Motor neuron (in vitro differentiated cells): ENCODE measurements at regions of chr5 and their contacts with region 1.

Region 1: GRCh38 chr5:59799668-59800346 is 93.7 kb downstream of the PDE4D start:
- ATAC-seq: peak; percentile 45 to 74 (median 62)
- H3K4me3 ChIP-seq: no peak overlapping the region
- H3K27ac ChIP-seq: no peak overlapping the region
- H3K4me1 ChIP-seq: no peaks in the 10 kb centered on the region

Region 2: DNA sequence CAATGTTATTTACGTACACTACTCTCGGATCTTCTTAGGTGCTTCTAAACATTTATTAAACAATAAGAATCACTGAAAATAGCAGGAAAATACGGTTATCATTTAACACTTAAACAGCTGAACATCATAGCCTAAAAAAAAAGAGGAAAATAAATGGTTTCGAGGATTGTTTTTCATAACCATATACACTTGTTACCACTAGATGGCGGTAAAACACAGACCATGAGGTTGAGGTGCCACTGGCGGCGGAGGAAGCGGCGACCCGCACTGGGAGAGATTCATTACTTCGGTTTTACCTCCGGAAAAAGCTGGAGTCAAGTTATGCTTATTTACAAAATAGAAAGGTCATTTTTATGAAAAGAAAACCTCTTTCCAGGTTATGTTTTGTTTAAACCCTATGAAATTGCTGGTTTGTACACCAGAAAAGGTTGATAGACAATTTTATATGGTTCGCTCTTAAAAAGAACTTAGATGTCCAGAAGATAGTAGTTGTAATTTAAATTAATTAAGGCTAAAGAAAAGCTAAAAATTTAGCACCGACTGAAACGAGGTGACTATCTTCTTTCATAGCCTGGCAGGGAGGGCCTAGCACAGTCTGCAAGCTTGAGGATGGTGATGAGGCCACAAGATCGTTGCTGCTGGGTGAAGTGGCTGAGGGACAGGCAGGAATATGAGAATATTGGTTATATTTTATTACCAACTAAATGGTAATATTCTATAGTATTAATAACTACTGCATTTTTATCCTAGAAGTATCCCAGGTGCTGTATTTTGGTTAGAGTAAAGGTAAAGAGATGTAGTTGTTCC is 611.2 kb before region 1 on chr5:
- in situ Hi-C with region 1: loop called in 4 of 9 experiments (anchors 25 kb)
- ATAC-seq: peak; percentile 53 to 81 (median 68)
- H3K4me3 ChIP-seq: peak overlapping the region in 4 of 5 donors; percentile 9 to 31 (median 21)
- H3K27ac ChIP-seq: no peak overlapping the region
- H3K4me1 ChIP-seq: peaks cover 0 to 14% of the 10 kb centered on the region in 2 donors

Region 3: DNA sequence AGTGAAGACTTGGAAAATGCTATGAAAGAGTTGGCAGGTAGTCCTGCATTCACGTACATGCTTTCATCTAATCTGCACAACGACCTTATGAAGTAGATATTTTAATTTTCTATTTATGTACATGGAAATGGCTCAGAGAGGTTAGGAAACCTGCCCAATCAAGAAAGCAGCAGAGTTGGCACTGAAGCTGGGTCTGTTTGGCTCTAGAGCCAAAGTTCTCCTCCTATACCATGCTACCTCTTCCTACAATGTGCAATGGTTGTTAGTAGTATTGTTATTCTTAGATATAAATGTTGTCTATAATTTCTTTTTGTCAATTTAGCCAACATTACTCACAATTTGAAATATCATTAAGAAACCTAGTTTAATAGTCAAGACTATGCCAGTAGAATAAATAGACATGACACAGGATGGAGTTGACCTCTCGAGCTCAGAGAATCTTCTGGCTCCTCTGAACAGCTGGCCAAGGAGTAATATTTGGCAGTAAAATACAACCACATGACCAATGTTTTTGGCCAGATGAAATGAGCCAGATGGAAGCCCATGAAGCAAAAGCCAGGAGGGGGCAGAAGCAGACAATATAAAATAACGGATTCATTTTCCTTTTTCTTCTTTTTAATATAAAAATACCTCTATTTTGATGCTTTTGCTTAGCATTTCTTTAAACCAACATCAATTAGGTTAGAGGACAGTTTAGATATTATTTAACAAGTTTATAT is 448.6 kb before region 1 on chr5:
- in situ Hi-C with region 1: no loop called
- ATAC-seq: peak in 1 of 8 experiments; percentile 63
- H3K4me3 ChIP-seq: no peak overlapping the region
- H3K27ac ChIP-seq: no peak overlapping the region
- H3K4me1 ChIP-seq: no peaks in the 10 kb centered on the region

Region 4: DNA sequence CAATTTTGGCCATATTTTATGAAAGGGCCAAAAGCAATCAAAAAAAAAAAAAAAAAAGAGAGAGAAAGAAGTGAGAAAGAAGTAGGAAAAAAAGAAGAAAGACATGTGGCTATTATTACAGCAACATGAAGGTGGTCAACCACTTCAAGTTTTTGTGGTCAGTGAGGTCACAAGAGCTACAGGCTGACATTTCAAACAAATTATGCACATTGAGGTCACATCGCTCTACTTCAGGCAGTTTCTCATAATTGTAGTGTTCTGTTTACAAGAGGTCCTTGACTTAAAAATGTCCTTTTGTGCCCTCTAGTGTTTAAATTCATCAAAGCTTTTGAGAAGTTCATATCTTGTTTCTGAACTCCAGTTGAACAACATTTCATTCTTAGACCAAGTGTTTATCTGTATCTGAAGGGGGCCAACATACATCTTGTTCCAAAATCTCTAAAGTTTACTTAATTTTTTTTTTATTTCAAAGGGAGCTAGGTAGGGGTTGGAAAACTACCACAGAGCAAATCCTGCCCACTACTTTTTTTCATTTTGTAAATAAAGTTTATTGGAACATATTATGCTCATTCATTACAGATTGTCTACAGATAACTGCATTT is 419.4 kb before region 1 on chr5:
- in situ Hi-C with region 1: loop called in 3 of 9 experiments (anchors 25 kb)
- ATAC-seq: peak; percentile 39 to 96 (median 56)
- H3K4me3 ChIP-seq: no peak overlapping the region
- H3K27ac ChIP-seq: no peak overlapping the region
- H3K4me1 ChIP-seq: peaks cover 0 to 2% of the 10 kb centered on the region in 2 donors

Region 5: DNA sequence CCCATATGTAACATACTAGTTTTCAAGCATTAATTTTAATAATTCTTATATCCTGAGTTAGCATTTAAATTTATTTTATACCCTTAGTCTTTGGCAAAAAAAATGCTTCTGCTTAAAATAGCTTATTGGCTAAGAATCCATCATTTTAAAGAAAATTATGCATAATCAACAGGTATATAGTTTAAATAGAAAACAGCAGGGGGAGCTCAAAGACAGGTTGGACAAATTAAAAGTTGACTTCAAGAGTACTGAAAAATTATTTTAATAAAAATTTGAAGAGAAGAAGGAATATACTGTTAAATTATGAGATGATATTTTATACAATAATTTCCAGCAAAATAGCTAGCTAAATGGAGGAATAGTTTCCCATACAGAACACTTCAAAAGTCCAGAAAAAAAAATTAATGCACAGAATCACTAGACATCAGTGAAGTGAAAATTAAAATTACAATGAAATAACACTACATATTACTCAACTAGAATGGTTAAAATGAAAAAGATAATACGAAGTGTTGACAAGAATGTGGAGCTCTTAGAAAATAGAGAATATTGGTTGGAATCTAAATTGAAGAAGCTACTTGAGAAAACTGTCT is 293.4 kb before region 1 on chr5:
- in situ Hi-C with region 1: loop called in 1 of 9 experiments (anchors 25 kb)
- ATAC-seq: no peak
- H3K4me3 ChIP-seq: no peak overlapping the region
- H3K27ac ChIP-seq: no peak overlapping the region
- H3K4me1 ChIP-seq: peaks cover 3% of the 10 kb centered on the region in 2 donors

Region 6: GRCh38 chr5:59685793-59686192 is 114.0 kb before region 1 on chr5:
- in situ Hi-C with region 1: loop called in 1 of 9 experiments (anchors 25 kb)
- ATAC-seq: peak in 3 of 8 experiments; percentile 45 to 62 (median 52)
- H3K4me3 ChIP-seq: no peak overlapping the region
- H3K27ac ChIP-seq: no peak overlapping the region
- H3K4me1 ChIP-seq: no peaks in the 10 kb centered on the region